Colonic mucosa (tissue), 4 donors: ENCODE measurements at regions of chr21 and their contacts with region 1.

Region 1: GRCh38 chr21:35375115-35375514 is 326.0 kb upstream of the RUNX1 start:
- DNase-seq: no peak
- H3K4me3 ChIP-seq: no peak overlapping the region
- H3K27ac ChIP-seq: no peak overlapping the region
- H3K4me1 ChIP-seq: no peaks in the 10 kb centered on the region
- H3K27me3 ChIP-seq: no peaks in the 10 kb centered on the region
- CTCF ChIP-seq: no peak

Region 2: GRCh38 chr21:35316933-35317332 is 58.2 kb before region 1 on chr21:
- intact Hi-C with region 1: loop called (anchors 10 kb)
- DNase-seq: no peak
- H3K4me3 ChIP-seq: no peak overlapping the region
- H3K27ac ChIP-seq: no peak overlapping the region
- H3K4me1 ChIP-seq: no peaks in the 10 kb centered on the region
- H3K27me3 ChIP-seq: no peaks in the 10 kb centered on the region
- CTCF ChIP-seq: no peak

Region 3: DNA sequence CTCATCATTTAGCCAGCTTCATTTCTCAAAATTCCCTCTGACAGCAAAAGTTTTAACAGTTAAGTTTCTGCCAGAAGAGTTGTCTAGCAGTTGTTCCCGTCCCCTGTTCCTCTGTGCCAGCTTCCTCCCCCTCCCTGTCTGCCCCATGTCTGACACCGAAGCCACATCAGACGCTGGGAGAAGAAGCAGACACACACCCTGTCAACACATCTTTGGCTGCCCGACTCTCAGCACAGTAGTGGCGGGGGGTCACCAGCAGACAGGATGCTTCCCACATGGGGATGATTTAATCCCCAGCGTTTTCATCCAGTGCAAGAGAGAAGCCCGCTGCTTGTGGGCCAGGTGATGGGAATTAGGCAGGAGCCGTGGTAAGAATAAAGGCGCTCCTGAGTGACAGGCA is 53.4 kb after region 1 on chr21:
- intact Hi-C with region 1: no loop called
- DNase-seq: no peak
- H3K4me3 ChIP-seq: no peak overlapping the region
- H3K27ac ChIP-seq: no peak overlapping the region
- H3K4me1 ChIP-seq: no peaks in the 10 kb centered on the region
- H3K27me3 ChIP-seq: no peaks in the 10 kb centered on the region
- CTCF ChIP-seq: no peak